CD8-positive, alpha-beta T cell (primary cell): ENCODE measurements at regions of chr11 and their contacts with region 1.

Region 1: GRCh38 chr11:107840129-107840484 is 18.5 kb downstream of the SLC35F2 start:
- DNase-seq: no peak
- ATAC-seq: no peak
- H3K4me3 ChIP-seq: no peak overlapping the region
- H3K4me3 Mint-ChIP-seq: no peak overlapping the region
- H3K27ac ChIP-seq: no peak overlapping the region
- H3K27ac Mint-ChIP-seq: no peak overlapping the region
- H3K4me1 ChIP-seq: peaks cover 11% of the 10 kb centered on the region
- H3K4me1 Mint-ChIP-seq: peaks cover 16% of the 10 kb centered on the region
- H3K27me3 ChIP-seq: no peaks in the 10 kb centered on the region
- H3K27me3 Mint-ChIP-seq: no peaks in the 10 kb centered on the region
- CTCF ChIP-seq: no peak

Region 2: GRCh38 chr11:106904826-106905225 is 935.3 kb before region 1 on chr11:
- CTCF ChIA-PET with region 1: no interaction called
- POLR2A ChIA-PET with region 1: no interaction called
- intact Hi-C with region 1: no loop called
- DNase-seq: no peak
- ATAC-seq: no peak
- H3K4me3 ChIP-seq: no peak overlapping the region
- H3K4me3 Mint-ChIP-seq: no peak overlapping the region
- H3K27ac ChIP-seq: no peak overlapping the region
- H3K27ac Mint-ChIP-seq: no peak overlapping the region
- H3K4me1 ChIP-seq: no peaks in the 10 kb centered on the region
- H3K4me1 Mint-ChIP-seq: no peaks in the 10 kb centered on the region
- H3K27me3 ChIP-seq: no peaks in the 10 kb centered on the region
- H3K27me3 Mint-ChIP-seq: no peaks in the 10 kb centered on the region
- CTCF ChIP-seq: no peak

Region 3: DNA sequence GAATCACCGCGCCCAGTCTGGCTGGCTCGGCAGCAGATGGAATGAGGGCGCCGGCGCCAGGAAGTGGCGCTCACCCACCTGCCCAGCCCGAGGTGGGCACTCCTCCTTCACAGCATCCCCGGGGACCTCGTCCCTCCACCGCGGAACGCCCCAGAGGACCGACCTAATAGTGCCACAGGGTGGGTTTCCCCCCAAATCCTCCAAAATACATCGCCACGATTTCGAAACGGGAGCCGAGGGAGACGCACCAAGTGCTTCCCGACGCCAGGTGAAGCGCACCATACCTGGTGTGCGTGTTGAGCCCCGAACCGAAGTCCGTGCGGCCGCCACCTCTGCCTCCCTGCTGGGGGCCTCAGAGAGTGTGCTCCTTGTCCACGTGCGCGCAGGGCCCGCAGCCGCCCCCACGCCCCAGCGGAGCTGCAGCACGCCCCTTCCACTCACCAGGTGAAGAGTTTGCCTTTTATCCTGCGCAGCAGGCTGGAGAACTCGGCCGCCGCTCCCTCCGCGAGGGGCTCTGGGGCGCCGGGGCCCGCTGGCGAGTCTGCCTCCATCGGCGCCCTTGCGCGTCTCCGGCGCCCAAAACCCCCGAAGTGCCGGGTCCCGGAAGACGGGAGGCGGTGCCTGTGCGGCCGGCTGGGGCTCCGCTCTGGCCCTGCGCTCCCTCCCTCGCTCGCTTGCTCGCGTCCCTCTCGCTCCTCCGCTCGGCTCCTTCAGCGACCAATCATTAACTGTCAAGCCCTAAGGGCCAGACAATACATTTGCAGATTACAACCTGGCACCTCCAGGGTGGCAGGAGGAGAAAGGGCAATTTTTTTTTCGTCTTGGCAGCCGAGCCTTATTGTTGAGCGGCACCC is 18.3 kb after region 1 on chr11 and contains the start of gene SLC35F2:
- CTCF ChIA-PET with region 1: no interaction called
- POLR2A ChIA-PET with region 1: no interaction called
- intact Hi-C with region 1: loop called in 1 of 2 experiments (anchors 1 kb)
- DNase-seq: peak; percentile 24 to 81 (median 62)
- ATAC-seq: peak; percentile 75
- H3K4me3 ChIP-seq: peak within 1 kb of the TSS; percentile 74 to 75
- H3K4me3 Mint-ChIP-seq: peak within 1 kb of the TSS; percentile 96
- H3K27ac ChIP-seq: peak within 1 kb of the TSS; percentile 26 to 49
- H3K27ac Mint-ChIP-seq: peak within 1 kb of the TSS; percentile 84
- H3K4me1 ChIP-seq: peaks cover 17% of the 10 kb centered on the region
- H3K4me1 Mint-ChIP-seq: peaks cover 29% of the 10 kb centered on the region
- H3K27me3 ChIP-seq: no peaks in the 10 kb centered on the region
- H3K27me3 Mint-ChIP-seq: no peaks in the 10 kb centered on the region
- CTCF ChIP-seq: no peak
- total RNA-seq, gene SLC35F2: 4.5 to 4.6 TPM